Aorta (tissue), 5 donors: ENCODE measurements at regions of chr10 and their contacts with region 1.

Region 1: DNA sequence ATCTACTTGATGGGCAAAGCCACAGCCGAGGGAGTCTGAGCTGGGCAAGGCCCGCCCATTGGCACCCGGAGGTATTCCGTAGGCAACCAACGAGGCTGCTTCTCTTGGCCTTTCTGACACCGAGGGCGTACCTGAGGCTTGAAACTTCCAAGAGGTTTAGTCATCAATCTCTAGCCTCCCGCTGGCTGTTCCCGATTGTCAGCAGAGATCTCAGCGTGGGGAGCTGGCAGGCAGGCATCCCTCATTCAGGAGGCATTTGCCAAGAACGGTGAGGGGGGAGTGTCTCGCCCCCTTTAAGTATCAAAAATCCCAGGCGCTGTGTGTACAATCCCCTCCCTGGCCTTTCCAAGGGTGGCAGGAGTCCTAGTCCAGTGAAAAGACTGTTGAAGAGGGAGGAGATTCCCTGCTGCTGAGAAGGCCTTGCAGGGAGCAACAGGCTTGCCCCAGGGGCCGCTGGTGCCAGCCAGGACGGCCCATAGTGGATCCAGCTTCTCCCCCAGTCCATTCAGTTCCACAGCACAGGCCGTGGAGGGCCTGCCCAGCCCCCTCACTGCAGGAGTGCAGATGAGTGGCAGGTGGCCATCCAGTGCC is 39.7 kb downstream of the OAT start:
- DNase-seq: peak in 1 of 2 donors; percentile 76
- ATAC-seq: peak; percentile 37
- H3K4me3 ChIP-seq: no peak overlapping the region
- H3K27ac ChIP-seq: no peak overlapping the region
- H3K4me1 ChIP-seq: no peaks in the 10 kb centered on the region
- H3K27me3 ChIP-seq: no peaks in the 10 kb centered on the region

Region 2: GRCh38 chr10:124323111-124323886 is 55.7 kb before region 1 on chr10:
- intact Hi-C with region 1: loop called in 1 of 2 experiments (anchors 10 kb)
- DNase-seq: no peak
- ATAC-seq: no peak
- H3K4me3 ChIP-seq: no peak overlapping the region
- H3K27ac ChIP-seq: no peak overlapping the region
- H3K4me1 ChIP-seq: no peaks in the 10 kb centered on the region
- H3K27me3 ChIP-seq: no peaks in the 10 kb centered on the region